CD4-positive, alpha-beta T cell (primary cell): ENCODE measurements at regions of chr19 and their contacts with region 1.

Region 1: GRCh38 chr19:16070366-16070990 is 5.8 kb upstream of the TPM4 start:
- DNase-seq: peak; percentile 69 to 98 (median 86)
- ATAC-seq: peak; percentile 88
- H3K4me3 ChIP-seq: peak overlapping the region; percentile 31
- H3K4me3 Mint-ChIP-seq: peak overlapping the region; percentile 76
- H3K27ac ChIP-seq: peak overlapping the region; percentile 84 to 92
- H3K27ac Mint-ChIP-seq: no peak overlapping the region
- H3K4me1 ChIP-seq: peaks cover 77% of the 10 kb centered on the region
- H3K4me1 Mint-ChIP-seq: peaks cover 40% of the 10 kb centered on the region
- H3K27me3 ChIP-seq: no peaks in the 10 kb centered on the region
- H3K27me3 Mint-ChIP-seq: no peaks in the 10 kb centered on the region
- CTCF ChIP-seq: peak; percentile 37

Region 2: GRCh38 chr19:15740785-15741184 is 329.7 kb before region 1 on chr19:
- CTCF ChIA-PET with region 1: no interaction called
- POLR2A ChIA-PET with region 1: no interaction called
- intact Hi-C with region 1: no loop called
- DNase-seq: no peak
- ATAC-seq: no peak
- H3K4me3 ChIP-seq: no peak overlapping the region
- H3K4me3 Mint-ChIP-seq: no peak overlapping the region
- H3K27ac ChIP-seq: no peak overlapping the region
- H3K27ac Mint-ChIP-seq: no peak overlapping the region
- H3K4me1 ChIP-seq: no peaks in the 10 kb centered on the region
- H3K4me1 Mint-ChIP-seq: no peaks in the 10 kb centered on the region
- H3K27me3 ChIP-seq: peaks cover 5% of the 10 kb centered on the region in 2 experiments
- H3K27me3 Mint-ChIP-seq: peaks cover 41% of the 10 kb centered on the region
- CTCF ChIP-seq: no peak

Region 3: DNA sequence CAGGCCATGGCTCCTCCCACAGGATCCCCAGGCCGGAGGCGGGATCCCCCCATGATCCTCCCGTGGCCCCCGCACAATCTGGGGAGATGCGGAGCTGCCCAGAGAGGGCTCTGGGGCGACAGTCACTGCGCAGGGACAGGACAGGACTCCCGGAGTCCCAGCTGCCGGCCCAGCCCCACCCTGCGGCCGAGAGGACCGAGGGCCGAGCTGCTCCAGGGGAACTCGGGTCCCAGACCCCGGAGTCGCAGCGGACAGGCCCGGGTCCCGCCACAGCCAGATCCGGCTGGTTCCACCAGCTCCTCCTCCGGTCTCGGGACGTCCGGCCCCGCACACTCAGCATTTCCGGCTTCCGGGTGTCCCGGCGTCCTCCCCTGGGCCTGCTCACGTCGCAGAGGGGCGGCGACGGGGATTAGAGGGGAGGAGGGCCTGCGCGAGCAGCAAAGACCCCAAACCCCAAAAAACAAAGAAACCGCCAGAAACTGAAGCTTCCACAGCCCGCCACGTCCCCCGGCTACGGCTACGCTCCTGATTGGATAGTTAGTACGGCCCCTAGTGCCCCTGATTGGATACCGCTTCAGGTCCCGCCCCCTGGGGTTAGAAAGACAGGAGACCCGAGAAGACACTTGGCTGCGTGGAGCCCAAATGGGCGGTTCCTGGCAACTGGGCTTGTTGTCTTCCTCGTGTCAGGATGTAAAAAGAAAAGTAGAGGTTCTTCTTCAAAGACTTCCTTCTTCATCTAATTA is 233.7 kb before region 1 on chr19:
- CTCF ChIA-PET with region 1: no interaction called
- POLR2A ChIA-PET with region 1: interaction called, 8 read pairs
- intact Hi-C with region 1: loop called (anchors 2 to 10 kb)
- DNase-seq: peak; percentile 86 to 98 (median 95)
- ATAC-seq: peak; percentile 86
- H3K4me3 ChIP-seq: peak overlapping the region; percentile 96
- H3K4me3 Mint-ChIP-seq: peak overlapping the region; percentile 96
- H3K27ac ChIP-seq: peak overlapping the region; percentile 97 to 99
- H3K27ac Mint-ChIP-seq: peak overlapping the region; percentile 92
- H3K4me1 ChIP-seq: peaks cover 20% of the 10 kb centered on the region
- H3K4me1 Mint-ChIP-seq: peaks cover 18% of the 10 kb centered on the region
- H3K27me3 ChIP-seq: no peaks in the 10 kb centered on the region
- H3K27me3 Mint-ChIP-seq: no peaks in the 10 kb centered on the region
- CTCF ChIP-seq: no peak

Region 4: GRCh38 chr19:16088351-16089009 is 18.0 kb after region 1 on chr19:
- CTCF ChIA-PET with region 1: interaction called, 38 read pairs
- POLR2A ChIA-PET with region 1: interaction called, 192 read pairs
- intact Hi-C with region 1: loop called (anchors 2 kb)
- DNase-seq: no peak
- ATAC-seq: no peak
- H3K4me3 ChIP-seq: no peak overlapping the region
- H3K4me3 Mint-ChIP-seq: no peak overlapping the region
- H3K27ac ChIP-seq: no peak overlapping the region
- H3K27ac Mint-ChIP-seq: peak overlapping the region; percentile 64
- H3K4me1 ChIP-seq: peaks cover 45% of the 10 kb centered on the region
- H3K4me1 Mint-ChIP-seq: peaks cover 46% of the 10 kb centered on the region
- H3K27me3 ChIP-seq: no peaks in the 10 kb centered on the region
- H3K27me3 Mint-ChIP-seq: no peaks in the 10 kb centered on the region
- CTCF ChIP-seq: no peak

Region 5: DNA sequence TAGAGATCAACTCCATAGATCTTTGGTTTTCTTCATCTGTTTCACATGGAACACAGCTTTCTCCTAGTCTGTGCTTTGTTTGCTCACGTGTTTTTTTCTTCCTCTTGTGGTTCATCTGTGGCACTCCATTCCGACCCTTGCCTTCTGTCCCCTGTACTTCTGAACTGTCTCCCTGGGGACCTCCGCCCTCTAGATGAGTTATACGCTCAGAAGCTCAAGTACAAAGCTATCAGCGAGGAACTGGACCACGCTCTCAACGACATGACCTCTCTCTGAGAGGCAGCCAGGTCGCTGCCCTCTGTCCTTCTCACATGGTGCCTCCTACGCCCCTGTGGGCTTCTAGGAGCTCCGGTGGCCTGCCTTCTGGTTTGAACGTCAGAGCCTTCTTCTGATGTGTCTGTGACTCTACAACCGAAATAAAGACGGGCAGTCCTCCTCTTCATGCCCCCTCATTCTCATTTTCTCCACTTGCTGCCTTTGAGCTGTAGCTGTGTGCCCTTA is 24.6 kb after region 1 on chr19:
- CTCF ChIA-PET with region 1: interaction called, 10 read pairs
- POLR2A ChIA-PET with region 1: interaction called, 192 read pairs
- intact Hi-C with region 1: no loop called
- DNase-seq: no peak
- ATAC-seq: peak; percentile 66
- H3K4me3 ChIP-seq: no peak overlapping the region
- H3K4me3 Mint-ChIP-seq: peak overlapping the region; percentile 64
- H3K27ac ChIP-seq: peak overlapping the region in 1 of 2 donors; percentile 41
- H3K27ac Mint-ChIP-seq: peak overlapping the region; percentile 80
- H3K4me1 ChIP-seq: peaks cover 9% of the 10 kb centered on the region
- H3K4me1 Mint-ChIP-seq: peaks cover 32% of the 10 kb centered on the region
- H3K27me3 ChIP-seq: no peaks in the 10 kb centered on the region
- H3K27me3 Mint-ChIP-seq: no peaks in the 10 kb centered on the region
- CTCF ChIP-seq: no peak

Region 6: GRCh38 chr19:16143399-16144245 is 73.1 kb after region 1 on chr19 and contains the start of gene HSH2D:
- CTCF ChIA-PET with region 1: interaction called, 3 read pairs
- POLR2A ChIA-PET with region 1: interaction called, 13 read pairs
- intact Hi-C with region 1: no loop called
- DNase-seq: peak; percentile 73 to 90 (median 80)
- ATAC-seq: peak; percentile 100
- H3K4me3 ChIP-seq: peak within 1 kb of the TSS; percentile 77
- H3K4me3 Mint-ChIP-seq: peak within 1 kb of the TSS; percentile 97
- H3K27ac ChIP-seq: peak within 1 kb of the TSS; percentile 70 to 74
- H3K27ac Mint-ChIP-seq: peak within 1 kb of the TSS; percentile 96
- H3K4me1 ChIP-seq: peaks cover 60% of the 10 kb centered on the region
- H3K4me1 Mint-ChIP-seq: peaks cover 28% of the 10 kb centered on the region
- H3K27me3 ChIP-seq: no peaks in the 10 kb centered on the region
- H3K27me3 Mint-ChIP-seq: no peaks in the 10 kb centered on the region
- CTCF ChIP-seq: no peak
- total RNA-seq, gene HSH2D: 46.0 to 46.9 TPM

Region 7: GRCh38 chr19:16301999-16302694 is 231.7 kb after region 1 on chr19:
- CTCF ChIA-PET with region 1: no interaction called
- POLR2A ChIA-PET with region 1: no interaction called
- intact Hi-C with region 1: no loop called
- DNase-seq: no peak
- ATAC-seq: no peak
- H3K4me3 ChIP-seq: no peak overlapping the region
- H3K4me3 Mint-ChIP-seq: no peak overlapping the region
- H3K27ac ChIP-seq: no peak overlapping the region
- H3K27ac Mint-ChIP-seq: no peak overlapping the region
- H3K4me1 ChIP-seq: no peaks in the 10 kb centered on the region
- H3K4me1 Mint-ChIP-seq: no peaks in the 10 kb centered on the region
- H3K27me3 ChIP-seq: no peaks in the 10 kb centered on the region
- H3K27me3 Mint-ChIP-seq: no peaks in the 10 kb centered on the region
- CTCF ChIP-seq: no peak